PC-9 (cell line): ENCODE measurements at regions of chr3 and their contacts with region 1.

Region 1: DNA sequence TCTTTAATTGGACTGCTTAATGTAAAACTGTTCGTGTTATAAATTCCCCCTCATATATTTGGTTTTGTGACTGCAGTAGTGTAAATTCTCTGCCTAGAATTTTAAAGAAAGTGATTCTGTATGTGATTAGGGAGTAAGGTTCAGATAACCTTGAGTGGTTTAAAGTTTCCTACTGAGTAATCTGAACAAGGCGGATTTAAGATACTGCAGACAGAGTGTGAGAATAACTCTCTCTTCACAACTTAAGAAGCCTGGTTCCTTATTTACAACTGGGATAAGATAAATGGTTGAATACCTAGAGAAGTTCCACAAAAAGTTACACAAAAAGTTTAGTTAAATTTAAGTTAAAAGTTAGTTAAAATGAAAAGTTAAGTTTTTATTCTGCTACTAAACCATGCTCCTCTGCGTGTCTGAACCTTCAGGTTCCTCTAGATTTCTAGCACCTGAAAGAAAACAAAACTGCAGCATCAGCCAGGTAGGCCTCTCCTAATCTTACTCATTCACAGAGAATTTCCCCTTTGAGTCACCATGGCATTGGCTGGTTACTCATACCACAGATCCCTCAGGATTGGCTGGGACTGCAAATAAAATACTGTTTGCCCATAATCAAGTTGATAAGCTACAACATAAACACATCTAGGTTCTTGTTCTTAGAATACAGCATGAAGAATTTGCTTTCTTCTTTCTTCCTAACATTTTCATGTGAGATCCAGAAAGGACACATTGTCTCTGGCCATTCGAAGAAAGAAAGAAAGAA is at the start of gene ARL14:
- DNase-seq: peak; percentile 75 to 97
- H3K4me3 ChIP-seq: peak within 1 kb of the TSS; percentile 48
- H3K27ac ChIP-seq: peak within 1 kb of the TSS; percentile 91
- H3K4me1 ChIP-seq: peaks cover 57% of the 10 kb centered on the region
- H3K27me3 ChIP-seq: no peaks in the 10 kb centered on the region
- CTCF ChIP-seq: no peak
- total RNA-seq, gene ARL14: 13.0 and 17.6 TPM in 2 replicates

Region 2: GRCh38 chr3:160399125-160400029 is 277.3 kb before region 1 on chr3 and contains the starts of genes IFT80 and SMC4:
- CTCF ChIA-PET with region 1: no interaction called
- POLR2A ChIA-PET with region 1: no interaction called
- intact Hi-C with region 1: loop called (anchors 5 kb)
- DNase-seq: peak; percentile 91 to 98
- H3K4me3 ChIP-seq: peak within 1 kb of the TSS; percentile 90
- H3K27ac ChIP-seq: peak within 1 kb of the TSS; percentile 67
- H3K4me1 ChIP-seq: peaks cover 32% of the 10 kb centered on the region
- H3K27me3 ChIP-seq: no peaks in the 10 kb centered on the region
- CTCF ChIP-seq: no peak
- total RNA-seq, gene IFT80: 47.9 and 59.4 TPM in 2 replicates
- total RNA-seq, gene SMC4: 138 and 181 TPM in 2 replicates

Region 3: DNA sequence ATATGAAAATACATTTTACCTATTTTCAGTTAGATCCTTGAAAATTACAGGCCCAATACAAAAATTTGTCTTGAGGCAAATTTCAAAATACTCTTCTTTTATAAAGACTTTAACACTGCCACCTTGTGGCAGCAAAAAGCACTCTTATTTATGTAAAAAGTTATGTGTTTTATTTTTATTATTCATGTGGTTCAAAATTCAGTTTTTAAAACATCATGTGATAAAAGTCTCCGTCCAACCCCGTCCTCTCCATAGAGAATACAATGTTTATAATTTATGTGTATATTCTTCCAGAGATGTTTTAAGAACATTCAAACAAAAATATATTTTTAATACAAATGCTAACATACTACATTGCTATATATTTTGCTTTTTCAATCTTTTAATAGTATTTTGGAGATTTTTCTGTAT is 190.3 kb before region 1 on chr3:
- CTCF ChIA-PET with region 1: no interaction called
- POLR2A ChIA-PET with region 1: interaction called, 11 read pairs
- intact Hi-C with region 1: no loop called
- DNase-seq: no peak
- H3K4me3 ChIP-seq: no peak overlapping the region
- H3K27ac ChIP-seq: no peak overlapping the region
- H3K4me1 ChIP-seq: no peaks in the 10 kb centered on the region
- H3K27me3 ChIP-seq: no peaks in the 10 kb centered on the region
- CTCF ChIP-seq: peak; percentile 85

Region 4: GRCh38 chr3:160754855-160755747 is 78.4 kb after region 1 on chr3:
- CTCF ChIA-PET with region 1: no interaction called
- POLR2A ChIA-PET with region 1: interaction called, 6 read pairs
- intact Hi-C with region 1: loop called (anchors 2 kb)
- DNase-seq: peak; percentile 82 to 92
- H3K4me3 ChIP-seq: peak overlapping the region; percentile 71
- H3K27ac ChIP-seq: peak overlapping the region; percentile 68
- H3K4me1 ChIP-seq: peaks cover 23% of the 10 kb centered on the region
- H3K27me3 ChIP-seq: no peaks in the 10 kb centered on the region
- CTCF ChIP-seq: no peak